CD4-positive, alpha-beta T cell (primary cell): ENCODE measurements at regions of chr5 and their contacts with region 1.

Region 1: GRCh38 chr5:150357326-150358260 is at the start of gene TCOF1:
- DNase-seq: peak; percentile 93 to 98 (median 97)
- ATAC-seq: peak; percentile 98
- H3K4me3 ChIP-seq: peak within 1 kb of the TSS; percentile 86
- H3K4me3 Mint-ChIP-seq: peak within 1 kb of the TSS; percentile 89
- H3K27ac ChIP-seq: peak within 1 kb of the TSS in 1 of 2 donors; percentile 46
- H3K27ac Mint-ChIP-seq: peak within 1 kb of the TSS; percentile 73
- H3K4me1 ChIP-seq: peaks cover 28% of the 10 kb centered on the region
- H3K4me1 Mint-ChIP-seq: peaks cover 47% of the 10 kb centered on the region
- H3K27me3 ChIP-seq: no peaks in the 10 kb centered on the region
- H3K27me3 Mint-ChIP-seq: no peaks in the 10 kb centered on the region
- CTCF ChIP-seq: no peak
- total RNA-seq, gene TCOF1: 40.4 to 43.2 TPM

Region 2: DNA sequence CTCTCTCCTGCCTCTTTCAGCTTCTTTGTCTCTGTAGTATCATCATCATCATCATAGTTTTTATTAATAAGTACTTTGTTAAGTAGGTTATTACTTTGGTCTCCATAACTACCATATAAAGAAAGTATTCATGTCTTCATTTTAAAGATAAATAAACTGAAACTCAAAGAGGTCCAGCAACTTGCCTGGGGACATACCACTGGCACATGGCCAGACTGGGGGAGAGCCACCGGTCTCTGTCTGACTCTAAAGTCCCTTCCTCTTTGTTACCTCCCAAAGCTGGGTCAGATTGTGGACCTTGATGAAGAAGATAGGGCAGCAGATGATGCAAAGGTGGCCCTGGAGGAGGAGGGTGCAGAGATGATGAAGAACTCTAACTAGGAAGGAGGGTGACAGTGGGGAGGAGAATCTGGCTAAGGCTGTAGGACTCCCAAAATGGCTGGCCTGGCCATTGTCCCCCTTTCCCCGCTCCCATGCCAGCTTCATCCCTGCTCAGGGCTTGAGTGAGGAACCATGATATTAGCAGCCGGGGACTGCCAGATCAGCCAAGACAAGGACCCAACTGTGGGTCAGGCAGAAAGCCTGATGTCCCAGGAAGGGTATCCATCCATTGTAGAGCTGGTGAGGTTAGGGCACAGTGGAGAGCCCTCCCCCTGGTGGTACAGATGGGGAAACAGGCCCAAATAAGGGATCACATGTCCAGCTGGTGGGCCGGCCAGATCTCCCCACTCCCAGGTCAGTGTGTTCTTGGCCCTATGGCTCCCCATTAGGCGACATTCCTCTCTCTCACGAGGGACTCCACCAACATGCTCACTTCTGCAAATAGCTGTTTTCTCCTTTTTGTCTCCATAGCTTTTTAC is 182.3 kb before region 1 on chr5:
- CTCF ChIA-PET with region 1: no interaction called
- POLR2A ChIA-PET with region 1: no interaction called
- intact Hi-C with region 1: no loop called
- DNase-seq: peak in 1 of 14 experiments; percentile 11
- ATAC-seq: no peak
- H3K4me3 ChIP-seq: no peak overlapping the region
- H3K4me3 Mint-ChIP-seq: no peak overlapping the region
- H3K27ac ChIP-seq: no peak overlapping the region
- H3K27ac Mint-ChIP-seq: no peak overlapping the region
- H3K4me1 ChIP-seq: no peaks in the 10 kb centered on the region
- H3K4me1 Mint-ChIP-seq: no peaks in the 10 kb centered on the region
- H3K27me3 ChIP-seq: peaks cover 3 to 7% of the 10 kb centered on the region in 2 experiments
- H3K27me3 Mint-ChIP-seq: peaks cover 39% of the 10 kb centered on the region
- CTCF ChIP-seq: no peak

Region 3: GRCh38 chr5:150398722-150399523 is 41.3 kb after region 1 on chr5:
- CTCF ChIA-PET with region 1: no interaction called
- POLR2A ChIA-PET with region 1: no interaction called
- intact Hi-C with region 1: loop called in 1 of 2 experiments (anchors 5 kb)
- DNase-seq: peak in 5 of 14 experiments; percentile 17 to 69 (median 27)
- ATAC-seq: peak; percentile 62
- H3K4me3 ChIP-seq: no peak overlapping the region
- H3K4me3 Mint-ChIP-seq: no peak overlapping the region
- H3K27ac ChIP-seq: no peak overlapping the region
- H3K27ac Mint-ChIP-seq: peak overlapping the region; percentile 65
- H3K4me1 ChIP-seq: no peaks in the 10 kb centered on the region
- H3K4me1 Mint-ChIP-seq: no peaks in the 10 kb centered on the region
- H3K27me3 ChIP-seq: no peaks in the 10 kb centered on the region
- H3K27me3 Mint-ChIP-seq: no peaks in the 10 kb centered on the region
- CTCF ChIP-seq: no peak

Region 4: DNA sequence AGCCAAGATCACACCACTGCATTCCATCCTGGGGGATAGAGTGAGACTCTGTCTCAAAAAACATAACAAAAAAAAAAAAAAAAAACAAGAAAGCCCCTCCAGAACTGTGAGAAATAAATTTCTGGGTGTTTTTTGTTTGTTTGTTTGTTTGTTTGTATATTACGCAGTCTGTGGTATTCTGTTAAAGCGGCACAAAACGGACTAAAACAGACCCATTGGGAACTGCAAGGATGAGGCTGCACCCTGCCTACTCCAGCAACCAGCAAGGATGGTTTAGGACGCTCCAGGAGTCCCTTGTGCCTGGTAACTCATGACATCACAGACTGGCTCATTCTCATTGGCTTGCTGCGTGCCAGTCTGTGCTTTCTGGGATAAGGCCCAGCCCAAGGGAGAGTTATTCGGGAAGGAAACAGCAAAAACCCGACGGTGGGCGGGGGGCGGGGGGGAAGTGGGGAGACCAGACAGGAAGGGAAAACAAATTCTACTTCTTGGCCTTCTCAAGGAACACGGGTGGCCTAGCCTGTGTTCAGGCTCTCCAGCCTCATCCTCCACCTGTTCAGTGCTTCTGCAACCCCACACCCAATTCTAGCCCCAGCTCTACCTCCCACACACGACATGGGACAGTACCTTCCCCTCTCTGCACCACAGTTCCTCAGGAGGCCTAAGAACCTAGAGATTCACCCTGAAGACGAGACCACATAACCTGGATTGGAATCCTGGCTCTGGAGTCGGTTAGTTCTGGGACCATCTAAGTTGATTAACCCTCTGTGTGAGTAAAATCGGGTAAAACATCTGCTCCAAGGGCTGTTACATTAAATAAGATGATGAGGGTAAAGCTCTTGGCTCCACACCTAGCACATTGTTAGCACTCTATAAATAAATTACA is 52.3 kb after region 1 on chr5:
- CTCF ChIA-PET with region 1: no interaction called
- POLR2A ChIA-PET with region 1: interaction called, 16 read pairs
- intact Hi-C with region 1: loop called in 1 of 2 experiments (anchors 2 kb)
- DNase-seq: peak in 10 of 14 experiments; percentile 16 to 77 (median 38)
- ATAC-seq: no peak
- H3K4me3 ChIP-seq: peak overlapping the region; percentile 97
- H3K4me3 Mint-ChIP-seq: peak overlapping the region; percentile 99
- H3K27ac ChIP-seq: peak overlapping the region; percentile 94 to 98
- H3K27ac Mint-ChIP-seq: peak overlapping the region; percentile 98
- H3K4me1 ChIP-seq: peaks cover 65% of the 10 kb centered on the region
- H3K4me1 Mint-ChIP-seq: peaks cover 40% of the 10 kb centered on the region
- H3K27me3 ChIP-seq: no peaks in the 10 kb centered on the region
- H3K27me3 Mint-ChIP-seq: no peaks in the 10 kb centered on the region
- CTCF ChIP-seq: no peak

Region 5: GRCh38 chr5:150694612-150695011 is 337.0 kb after region 1 on chr5:
- CTCF ChIA-PET with region 1: no interaction called
- POLR2A ChIA-PET with region 1: no interaction called
- intact Hi-C with region 1: loop called in 1 of 2 experiments (anchors 5 kb)
- DNase-seq: no peak
- ATAC-seq: no peak
- H3K4me3 ChIP-seq: no peak overlapping the region
- H3K4me3 Mint-ChIP-seq: no peak overlapping the region
- H3K27ac ChIP-seq: no peak overlapping the region
- H3K27ac Mint-ChIP-seq: no peak overlapping the region
- H3K4me1 ChIP-seq: peaks cover 5% of the 10 kb centered on the region
- H3K4me1 Mint-ChIP-seq: no peaks in the 10 kb centered on the region
- H3K27me3 ChIP-seq: no peaks in the 10 kb centered on the region
- H3K27me3 Mint-ChIP-seq: no peaks in the 10 kb centered on the region
- CTCF ChIP-seq: no peak